A673 (cell line): ENCODE measurements at regions of chr3 and their contacts with region 1.

Region 1: GRCh38 chr3:189862390-189863023 is 231.3 kb downstream of the TP63 start:
- DNase-seq: peak; percentile 48
- H3K4me3 ChIP-seq: no peak overlapping the region
- H3K27ac ChIP-seq: peak overlapping the region; percentile 36
- H3K4me1 ChIP-seq: peaks cover 11% of the 10 kb centered on the region
- H3K27me3 ChIP-seq: no peaks in the 10 kb centered on the region
- CTCF ChIP-seq: no peak

Region 2: DNA sequence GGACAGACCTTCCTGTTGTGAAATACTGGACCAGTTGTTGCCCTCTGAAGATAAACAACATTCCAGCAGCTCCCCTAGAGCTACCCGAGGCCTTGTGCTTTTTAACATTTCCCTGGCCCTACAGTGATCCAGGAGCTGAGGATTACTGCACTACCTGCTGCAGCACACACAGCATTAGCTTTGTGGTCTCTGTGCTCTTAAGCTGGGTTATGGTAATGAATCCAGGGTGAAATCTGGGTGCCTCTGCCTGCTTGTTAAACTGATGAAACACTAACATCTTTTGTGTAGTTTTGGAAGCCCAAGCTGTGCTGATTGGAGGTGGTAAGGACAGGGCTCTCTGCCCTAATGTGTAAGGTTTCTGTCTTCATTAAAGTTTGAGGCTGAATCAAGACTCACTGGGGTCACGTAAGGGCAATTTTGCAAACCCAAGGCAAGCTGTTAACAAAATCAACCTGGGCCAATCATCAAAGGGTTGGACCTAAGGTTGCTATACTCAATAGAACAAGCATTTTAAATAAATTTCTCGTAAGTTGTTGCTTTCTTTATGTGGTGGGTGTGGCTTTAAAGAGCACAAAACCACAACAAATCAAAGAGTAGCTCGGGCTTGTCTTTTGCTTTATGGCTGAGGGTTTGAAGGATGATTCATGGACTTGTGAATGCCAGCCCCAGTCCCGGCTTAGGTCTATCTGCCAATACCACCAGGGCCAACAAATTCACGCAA is 506.9 kb before region 1 on chr3:
- CTCF ChIA-PET with region 1: no interaction called
- POLR2A ChIA-PET with region 1: no interaction called
- intact Hi-C with region 1: no loop called
- DNase-seq: no peak
- H3K4me3 ChIP-seq: no peak overlapping the region
- H3K27ac ChIP-seq: peak overlapping the region; percentile 11
- H3K4me1 ChIP-seq: peaks cover 16% of the 10 kb centered on the region
- H3K27me3 ChIP-seq: no peaks in the 10 kb centered on the region
- CTCF ChIP-seq: no peak

Region 3: DNA sequence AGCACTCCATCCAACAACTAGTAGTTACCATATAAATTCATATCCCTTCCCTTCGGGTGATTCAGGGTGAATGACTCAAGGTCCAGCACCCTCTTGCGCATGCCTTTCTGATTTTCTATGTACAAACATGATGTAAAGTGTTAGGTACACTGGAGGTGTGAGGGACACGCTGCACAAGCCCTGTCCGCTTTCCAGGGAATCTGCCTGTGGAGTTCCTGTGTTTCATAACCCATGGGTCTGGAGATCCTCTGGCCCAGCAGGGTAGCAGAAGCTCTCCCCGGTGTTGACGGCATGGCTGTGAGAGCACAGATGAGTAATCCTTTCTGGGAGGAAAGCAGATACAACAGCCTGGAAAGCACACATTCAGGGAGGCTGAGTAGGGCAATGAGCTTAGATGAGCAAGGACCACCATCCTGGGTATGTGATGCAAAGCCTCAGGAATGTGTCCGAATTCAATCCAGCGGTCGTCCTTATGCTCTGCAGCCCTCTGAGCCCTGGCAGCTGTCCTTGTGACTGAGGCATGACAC is 374.2 kb before region 1 on chr3:
- CTCF ChIA-PET with region 1: interaction called, 10 read pairs
- POLR2A ChIA-PET with region 1: no interaction called
- intact Hi-C with region 1: no loop called
- DNase-seq: peak; percentile 64
- H3K4me3 ChIP-seq: no peak overlapping the region
- H3K27ac ChIP-seq: peak overlapping the region; percentile 44
- H3K4me1 ChIP-seq: peaks cover 16% of the 10 kb centered on the region
- H3K27me3 ChIP-seq: no peaks in the 10 kb centered on the region
- CTCF ChIP-seq: no peak

Region 4: DNA sequence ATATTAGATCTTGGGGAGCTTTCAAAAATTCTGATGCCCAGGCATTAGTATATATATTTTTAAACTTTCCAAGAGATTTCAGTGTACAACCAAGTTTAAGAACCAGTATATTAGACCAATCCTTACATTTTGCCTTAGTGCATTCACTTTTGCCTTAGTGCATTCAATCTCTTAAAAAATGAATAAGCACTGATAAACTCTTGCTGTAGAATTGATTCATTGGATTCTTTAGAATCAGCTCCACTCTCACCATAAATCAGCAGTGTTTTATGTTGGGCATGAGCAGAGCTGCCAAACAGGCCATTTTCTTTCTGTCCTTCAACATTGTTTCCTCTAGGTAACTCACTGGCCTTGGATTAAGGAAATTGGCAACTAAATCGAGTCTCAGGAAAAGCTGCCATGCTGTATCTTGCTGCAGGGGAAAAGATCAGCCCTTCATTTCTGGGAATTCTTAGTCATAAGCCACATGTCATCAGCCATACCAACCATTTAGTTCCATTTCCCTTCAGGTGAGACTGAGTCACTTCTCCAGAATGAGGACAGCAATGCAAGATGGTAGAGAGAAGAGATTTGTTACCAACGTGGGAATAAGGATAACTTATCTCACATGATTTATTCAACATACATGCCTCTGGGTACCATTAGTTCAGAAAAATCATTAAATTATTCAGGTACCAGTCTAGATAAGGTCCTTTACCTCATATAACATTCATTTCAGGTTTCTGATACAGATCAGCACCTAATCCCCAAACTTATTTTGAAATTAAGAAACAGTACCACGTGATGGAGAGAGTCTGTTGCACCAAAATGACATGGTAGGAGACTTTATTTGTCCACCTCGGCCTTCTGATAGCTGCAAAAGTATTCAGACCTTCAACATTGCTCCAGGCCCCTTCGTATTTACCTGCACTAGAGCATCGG is 65.7 kb after region 1 on chr3:
- CTCF ChIA-PET with region 1: no interaction called
- POLR2A ChIA-PET with region 1: no interaction called
- intact Hi-C with region 1: no loop called
- DNase-seq: no peak
- H3K4me3 ChIP-seq: no peak overlapping the region
- H3K27ac ChIP-seq: no peak overlapping the region
- H3K4me1 ChIP-seq: peaks cover 4% of the 10 kb centered on the region
- H3K27me3 ChIP-seq: no peaks in the 10 kb centered on the region
- CTCF ChIP-seq: no peak

Region 5: DNA sequence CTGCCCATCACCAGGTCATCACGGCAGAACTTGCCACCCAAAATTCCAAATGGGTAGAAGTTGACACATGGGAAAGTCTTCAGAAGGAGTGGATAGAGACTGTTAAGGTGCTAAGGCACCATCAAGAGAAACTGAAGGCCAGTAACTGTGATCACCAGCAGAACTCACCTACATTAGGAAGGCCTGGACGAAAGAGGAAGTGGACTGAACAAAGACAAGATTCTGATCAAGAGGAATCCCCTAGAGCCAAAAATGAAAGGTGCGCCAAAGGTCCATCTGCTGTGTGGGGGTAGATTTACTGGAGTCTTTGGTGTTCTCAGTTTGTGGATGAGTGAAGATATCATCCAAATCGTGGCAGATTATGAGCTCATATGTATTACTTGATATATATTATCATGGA is 304.4 kb after region 1 on chr3:
- CTCF ChIA-PET with region 1: no interaction called
- POLR2A ChIA-PET with region 1: no interaction called
- intact Hi-C with region 1: no loop called
- DNase-seq: no peak
- H3K4me3 ChIP-seq: no peak overlapping the region
- H3K27ac ChIP-seq: no peak overlapping the region
- H3K4me1 ChIP-seq: no peaks in the 10 kb centered on the region
- H3K27me3 ChIP-seq: no peaks in the 10 kb centered on the region
- CTCF ChIP-seq: no peak